ENCODE measurements at regions of chr4 and their contacts with region 1.

Region 1: GRCh38 chr4:128658214-128658631 is 151.3 kb upstream of the JADE1 start:
- DNase-seq: no peak
- H3K4me3 ChIP-seq: no peak overlapping the region
- H3K27ac ChIP-seq: peak overlapping the region; percentile 54
- H3K4me1 ChIP-seq: peaks cover 32% of the 10 kb centered on the region
- H3K27me3 ChIP-seq: no peaks in the 10 kb centered on the region
- CTCF ChIP-seq: no peak
- POLR2A ChIP-seq: no peak

Region 2: GRCh38 chr4:128574706-128575105 is 83.5 kb before region 1 on chr4:
- intact Hi-C with region 1: loop called (anchors 5 kb)
- DNase-seq: no peak
- H3K4me3 ChIP-seq: no peak overlapping the region
- H3K27ac ChIP-seq: no peak overlapping the region
- H3K4me1 ChIP-seq: peaks cover 16% of the 10 kb centered on the region
- H3K27me3 ChIP-seq: no peaks in the 10 kb centered on the region
- CTCF ChIP-seq: peak in 1 of 3 experiments; percentile 28
- POLR2A ChIP-seq: no peak

Region 3: DNA sequence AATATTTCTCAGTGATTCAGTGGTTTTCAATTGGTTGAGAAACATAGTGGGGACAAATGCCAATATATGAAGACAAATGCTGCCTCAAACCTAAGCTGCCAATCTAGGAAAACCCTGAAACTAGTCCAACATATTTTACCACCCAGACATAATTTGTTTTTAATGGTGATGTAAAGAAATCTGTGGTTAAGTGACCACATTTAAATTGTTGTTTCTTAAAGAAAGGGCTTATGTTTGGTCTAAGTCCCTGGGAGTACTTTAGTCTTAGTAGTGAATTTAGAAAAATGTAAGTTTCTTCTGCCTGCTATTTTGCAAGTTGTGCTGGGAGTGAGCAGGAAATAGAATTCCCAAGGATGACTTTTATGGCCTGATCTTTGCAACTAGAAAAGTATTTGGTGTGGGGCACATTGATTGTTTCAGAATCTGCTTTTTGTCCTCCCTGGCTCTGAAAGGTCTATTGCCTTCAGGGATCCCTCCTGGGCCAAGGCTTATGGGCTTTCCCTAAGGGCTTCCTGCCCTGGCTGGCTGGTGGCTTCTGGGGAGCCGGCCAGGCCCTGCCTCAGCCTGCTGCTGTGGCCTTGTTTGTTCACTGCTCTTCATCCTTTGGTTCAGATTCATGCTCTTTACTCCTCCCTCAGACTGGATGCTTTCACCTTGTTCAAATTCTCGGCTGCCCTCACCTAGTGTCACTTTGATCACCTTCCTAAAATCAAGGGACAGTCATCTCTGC is 18.5 kb before region 1 on chr4:
- intact Hi-C with region 1: loop called (anchors 2 kb)
- DNase-seq: no peak
- H3K4me3 ChIP-seq: no peak overlapping the region
- H3K27ac ChIP-seq: peak overlapping the region; percentile 46
- H3K4me1 ChIP-seq: peaks cover 9% of the 10 kb centered on the region
- H3K27me3 ChIP-seq: no peaks in the 10 kb centered on the region
- CTCF ChIP-seq: no peak
- POLR2A ChIP-seq: no peak

Measured in vagina (tissue), 2 donors.